GM12878 (cell line): ENCODE measurements at regions of chr14 and their contacts with region 1.

Region 1: DNA sequence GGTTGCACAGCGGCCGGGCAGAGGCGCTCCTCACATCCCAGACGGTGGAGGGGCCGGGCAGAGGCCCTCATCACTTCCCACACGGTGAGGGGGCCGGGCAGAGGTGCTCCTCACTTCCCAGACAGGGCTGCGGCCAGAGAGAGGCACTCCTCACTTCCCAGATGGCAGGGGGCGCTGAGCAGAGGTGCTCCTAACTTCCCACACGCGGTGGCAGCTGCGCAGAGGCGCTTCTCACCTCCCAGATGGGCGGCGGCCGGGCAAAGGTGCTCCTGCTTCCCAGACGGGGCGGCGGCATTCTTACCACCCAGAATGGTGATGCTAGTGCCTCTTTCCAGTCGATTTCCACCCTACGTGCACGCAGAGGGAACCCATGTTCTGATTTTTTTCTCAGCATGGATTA is 304.4 kb downstream of the RGS6 start:
- DNase-seq: no peak
- ATAC-seq: no peak
- H3K4me3 ChIP-seq: no peak overlapping the region
- H3K27ac ChIP-seq: no peak overlapping the region
- H3K4me1 ChIP-seq: no peaks in the 10 kb centered on the region
- H3K27me3 ChIP-seq: no peaks in the 10 kb centered on the region
- CTCF ChIP-seq: no peak
- EP300 ChIP-seq: no peak
- POLR2A ChIP-seq: no peak
- RAD21 ChIP-seq: no peak

Region 2: GRCh38 chr14:72213424-72213823 is 23.2 kb before region 1 on chr14:
- CTCF ChIA-PET with region 1: interaction called, 4 read pairs
- POLR2A ChIA-PET with region 1: interaction called, 5 read pairs
- RAD21 ChIA-PET with region 1: no interaction called
- SMC1A ChIA-PET with region 1: interaction called, 15 read pairs
- in situ Hi-C with region 1: no loop called
- intact Hi-C with region 1: no loop called
- DNase-seq: no peak
- ATAC-seq: no peak
- H3K4me3 ChIP-seq: no peak overlapping the region
- H3K27ac ChIP-seq: no peak overlapping the region
- H3K4me1 ChIP-seq: no peaks in the 10 kb centered on the region
- H3K27me3 ChIP-seq: no peaks in the 10 kb centered on the region
- CTCF ChIP-seq: no peak
- EP300 ChIP-seq: no peak
- POLR2A ChIP-seq: no peak
- RAD21 ChIP-seq: no peak